ENCODE measurements at regions of chr17 and their contacts with region 1.

Region 1: DNA sequence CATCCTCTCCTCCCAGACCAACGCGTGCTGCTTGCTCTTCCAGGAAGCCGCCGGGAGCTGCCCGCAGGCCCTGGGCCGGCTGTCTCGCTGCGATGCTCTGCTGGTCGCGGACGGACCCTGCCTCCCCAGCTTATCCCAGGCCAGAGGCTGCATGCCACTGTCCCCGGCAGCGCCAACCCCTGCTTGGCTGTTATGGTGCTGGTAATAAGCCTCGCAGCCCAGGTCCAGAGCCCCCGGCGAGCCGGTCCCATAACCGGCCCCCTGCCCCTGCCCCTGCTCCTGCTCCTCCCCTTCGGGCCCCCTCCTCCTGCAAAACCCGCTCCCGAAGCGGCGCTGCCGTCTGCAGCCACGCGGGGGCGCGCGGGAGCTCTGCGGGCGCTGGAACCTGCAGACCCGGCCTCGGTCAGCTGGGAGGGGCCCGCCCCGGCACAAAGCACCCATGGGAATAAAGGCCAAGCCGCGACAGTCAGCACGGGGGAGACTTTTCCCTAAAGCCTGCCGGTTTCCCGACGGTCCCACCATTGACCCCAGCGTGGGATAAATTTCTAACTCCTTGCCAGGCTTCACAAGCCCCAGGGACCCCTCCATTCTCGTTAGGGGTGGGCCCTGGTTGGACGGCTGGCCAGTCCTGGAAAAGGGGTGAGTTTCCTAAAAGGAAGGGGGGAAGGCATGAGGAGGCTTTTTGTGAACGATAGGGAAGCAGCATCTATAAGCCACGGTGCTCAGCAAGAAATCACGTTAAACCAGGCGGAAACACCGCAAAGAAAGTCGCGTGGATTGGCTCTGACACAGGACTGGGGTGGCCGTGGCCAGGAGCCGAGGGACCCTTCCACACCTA is 11.2 kb downstream of the ENPP7 start:
- DNase-seq: peak; percentile 62
- H3K4me3 ChIP-seq: no peak overlapping the region
- H3K27ac ChIP-seq: no peak overlapping the region
- H3K4me1 ChIP-seq: peaks cover 8% of the 10 kb centered on the region
- H3K27me3 ChIP-seq: peaks cover 2% of the 10 kb centered on the region
- CTCF ChIP-seq: peak; percentile 69 to 85 (median 83)
- POLR2A ChIP-seq: no peak

Region 2: GRCh38 chr17:79915850-79916430 is 174.0 kb after region 1 on chr17:
- intact Hi-C with region 1: loop called (anchors 10 kb)
- DNase-seq: no peak
- H3K4me3 ChIP-seq: no peak overlapping the region
- H3K27ac ChIP-seq: no peak overlapping the region
- H3K4me1 ChIP-seq: peaks cover 10% of the 10 kb centered on the region
- H3K27me3 ChIP-seq: no peaks in the 10 kb centered on the region
- CTCF ChIP-seq: peak in 2 of 4 experiments; percentile 23 to 50
- POLR2A ChIP-seq: no peak

Measured in prostate gland (tissue), 2 donors.